ENCODE measurements at regions of chr4 and their contacts with region 1.

Region 1: GRCh38 chr4:93710101-93710846 is 118.3 kb upstream of the ATOH1 start:
- DNase-seq: no peak
- H3K4me3 ChIP-seq: no peak overlapping the region
- H3K27ac ChIP-seq: no peak overlapping the region
- H3K4me1 ChIP-seq: no peaks in the 10 kb centered on the region
- H3K27me3 ChIP-seq: no peaks in the 10 kb centered on the region
- CTCF ChIP-seq: peak; percentile 12 to 82 (median 68)
- EP300 ChIP-seq: no peak
- POLR2A ChIP-seq: no peak
- RAD21 ChIP-seq: peak; percentile 93 to 95

Region 2: GRCh38 chr4:93740890-93741289 is 30.6 kb after region 1 on chr4:
- CTCF ChIA-PET with region 1: interaction called, 10 read pairs
- POLR2A ChIA-PET with region 1: no interaction called
- DNase-seq: no peak
- H3K4me3 ChIP-seq: no peak overlapping the region
- H3K27ac ChIP-seq: no peak overlapping the region
- H3K4me1 ChIP-seq: 0 out of 7 replicates have a peak, but pooled peaks cover 0 to 3% (median 0%) of the 10 kb centered on the region in 4 experiments
- H3K27me3 ChIP-seq: no peaks in the 10 kb centered on the region
- CTCF ChIP-seq: no peak
- EP300 ChIP-seq: no peak
- POLR2A ChIP-seq: no peak
- RAD21 ChIP-seq: no peak

Region 3: DNA sequence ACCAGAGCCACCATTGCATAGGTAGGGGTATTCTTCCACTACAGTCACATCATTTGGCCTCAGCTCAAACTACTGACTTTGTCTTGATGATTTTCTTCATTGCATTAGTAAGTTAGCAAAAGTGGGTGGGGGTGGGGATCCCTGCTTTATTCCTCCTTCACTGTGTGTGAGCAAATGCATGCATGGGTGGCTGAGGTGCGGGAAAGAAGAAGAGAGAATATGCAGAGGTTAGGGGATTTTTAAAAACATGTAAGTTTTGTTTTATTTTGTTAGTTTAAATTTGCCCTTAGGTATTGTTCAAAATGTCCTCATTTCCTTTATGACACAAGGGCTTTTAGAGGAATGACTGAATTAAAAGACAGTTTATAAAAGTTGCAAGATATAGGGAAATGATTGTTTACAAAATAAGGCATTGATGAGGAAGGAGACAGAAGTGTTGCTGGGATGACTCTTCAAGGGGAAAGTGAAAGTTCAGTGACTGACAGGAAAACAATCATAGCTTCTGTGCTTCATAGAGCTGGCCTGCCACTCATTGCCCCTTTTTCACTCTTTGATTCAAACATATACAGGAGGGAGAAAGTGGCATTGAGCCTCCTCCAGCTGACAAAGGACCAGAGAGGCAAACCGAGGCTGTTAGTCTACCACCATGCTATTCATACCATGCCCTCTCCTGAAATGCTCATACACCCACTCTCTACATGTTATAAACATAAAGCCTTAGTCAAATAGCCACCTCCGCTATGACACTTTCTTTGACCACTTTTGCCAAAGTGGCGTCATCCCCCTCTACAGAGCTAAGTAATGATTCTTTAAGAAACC is 38.9 kb after region 1 on chr4:
- CTCF ChIA-PET with region 1: interaction called, 12 read pairs
- POLR2A ChIA-PET with region 1: no interaction called
- DNase-seq: no peak
- H3K4me3 ChIP-seq: 0 out of 8 replicates have a peak overlapping the region, but pooled peaks of 1 of the 4 experiments have one; percentile 5
- H3K27ac ChIP-seq: no peak overlapping the region
- H3K4me1 ChIP-seq: peaks cover 2 to 8% (median 3%) of the 10 kb centered on the region in 4 experiments; a peak in 4 of 7 replicates
- H3K27me3 ChIP-seq: no peaks in the 10 kb centered on the region
- CTCF ChIP-seq: no peak
- EP300 ChIP-seq: no peak
- POLR2A ChIP-seq: no peak
- RAD21 ChIP-seq: no peak

Region 4: DNA sequence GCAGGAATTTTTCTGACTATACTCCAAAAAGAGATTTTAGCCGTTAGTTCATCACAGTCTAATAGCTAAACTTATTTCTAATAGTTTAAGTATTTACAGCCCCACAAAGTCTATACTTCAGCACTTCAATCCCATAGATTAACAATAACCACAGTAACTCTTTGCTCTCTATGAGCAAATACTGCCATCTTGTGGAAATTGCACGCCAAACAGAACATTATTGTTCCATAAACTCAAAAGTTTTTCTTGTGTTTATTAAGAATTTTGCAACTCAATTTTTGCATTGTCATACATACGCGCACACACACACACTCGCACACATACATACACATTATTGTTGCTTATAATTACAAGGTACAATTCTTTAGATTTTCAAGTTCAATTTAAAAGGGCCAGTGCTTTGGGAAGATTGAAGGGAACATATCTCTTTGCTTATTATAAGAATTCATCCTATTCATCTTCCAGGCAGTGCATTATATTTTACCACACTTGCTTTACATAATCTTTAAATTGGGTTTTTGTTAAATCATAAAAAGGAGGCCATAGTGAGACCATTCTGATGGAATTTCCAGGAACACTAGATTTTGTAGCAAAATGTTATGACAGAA is 54.5 kb after region 1 on chr4:
- CTCF ChIA-PET with region 1: interaction called, 21 read pairs
- POLR2A ChIA-PET with region 1: no interaction called
- DNase-seq: no peak
- H3K4me3 ChIP-seq: no peak overlapping the region
- H3K27ac ChIP-seq: no peak overlapping the region
- H3K4me1 ChIP-seq: peaks cover 0 to 4% (median 0%) of the 10 kb centered on the region in 4 experiments; a peak in 1 of 7 replicates
- H3K27me3 ChIP-seq: no peaks in the 10 kb centered on the region
- CTCF ChIP-seq: peak in 2 of 3 experiments; percentile 54 to 68; a peak in 2 of 4 replicates
- EP300 ChIP-seq: no peak
- POLR2A ChIP-seq: no peak
- RAD21 ChIP-seq: peak; percentile 89 to 95

Region 5: DNA sequence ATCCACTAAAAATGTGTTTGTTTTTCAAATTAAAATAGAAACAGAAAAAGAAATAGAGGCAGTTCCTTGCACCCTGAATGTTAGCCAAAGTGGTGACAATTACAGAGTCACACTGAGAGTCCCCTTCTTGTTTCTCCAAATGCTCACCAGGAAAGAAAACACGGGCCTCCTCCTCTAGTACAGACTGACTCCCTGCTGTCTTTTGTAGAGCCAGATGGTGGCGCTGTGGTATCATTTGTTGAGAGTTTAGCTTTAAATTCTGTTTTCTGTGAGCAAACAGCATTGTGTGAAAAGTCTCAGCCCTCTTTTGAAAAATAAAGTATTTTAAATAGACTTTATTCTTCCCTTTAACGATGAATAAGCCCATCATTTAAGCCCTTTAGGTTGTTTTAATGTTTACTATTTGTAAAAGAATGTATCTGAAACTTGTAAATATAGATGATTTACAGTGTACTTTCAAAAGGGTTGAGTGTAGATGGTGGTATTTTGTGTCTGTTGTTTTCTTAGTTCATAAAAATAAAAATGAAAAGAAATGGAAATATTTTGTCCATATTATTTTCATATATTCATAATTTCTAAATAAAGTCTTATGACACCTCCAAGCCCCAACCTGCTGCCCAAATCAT is 81.4 kb after region 1 on chr4:
- CTCF ChIA-PET with region 1: interaction called, 12 read pairs
- POLR2A ChIA-PET with region 1: no interaction called
- DNase-seq: peak in 1 of 2 experiments; percentile 70
- H3K4me3 ChIP-seq: no peak overlapping the region
- H3K27ac ChIP-seq: no peak overlapping the region
- H3K4me1 ChIP-seq: no peaks in the 10 kb centered on the region; a peak in 1 of 7 replicates
- H3K27me3 ChIP-seq: no peaks in the 10 kb centered on the region
- CTCF ChIP-seq: peak in 2 of 3 experiments; percentile 83 to 84; a peak in 3 of 4 replicates
- EP300 ChIP-seq: no peak
- POLR2A ChIP-seq: no peak
- RAD21 ChIP-seq: peak; percentile 96 to 98

Region 6: DNA sequence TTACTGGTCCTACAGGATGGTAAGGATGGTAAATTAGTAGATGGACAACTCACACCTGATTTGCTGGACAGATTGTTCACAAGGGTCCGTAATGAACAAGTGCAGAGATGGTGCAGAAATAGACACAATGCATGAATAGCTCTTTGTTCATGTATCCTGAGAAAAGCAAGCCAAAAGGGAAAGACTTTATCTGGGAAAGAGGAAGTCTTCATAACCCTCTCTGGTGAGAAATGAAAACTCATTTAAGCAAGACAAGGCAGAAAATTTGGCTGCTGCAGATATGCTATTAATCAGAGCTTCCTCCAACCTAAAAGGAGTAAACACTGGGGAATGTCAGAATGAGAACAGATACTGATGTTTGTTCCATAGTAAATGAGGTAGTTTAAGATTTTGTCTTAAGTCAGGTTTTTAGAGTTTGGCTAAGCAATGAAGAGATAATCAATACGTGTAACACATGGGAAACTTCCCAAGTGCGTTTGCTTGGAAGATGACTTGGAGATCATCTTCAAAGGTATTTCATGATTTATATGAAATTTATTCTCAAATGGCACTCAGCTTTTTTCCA is 895.0 kb after region 1 on chr4:
- CTCF ChIA-PET with region 1: no interaction called
- POLR2A ChIA-PET with region 1: no interaction called
- DNase-seq: no peak
- H3K4me3 ChIP-seq: no peak overlapping the region
- H3K27ac ChIP-seq: no peak overlapping the region
- H3K4me1 ChIP-seq: no peaks in the 10 kb centered on the region
- H3K27me3 ChIP-seq: no peaks in the 10 kb centered on the region
- CTCF ChIP-seq: no peak
- EP300 ChIP-seq: no peak
- POLR2A ChIP-seq: no peak
- RAD21 ChIP-seq: no peak